ENCODE measurements at regions of chr22 and their contacts with region 1.

Region 1: DNA sequence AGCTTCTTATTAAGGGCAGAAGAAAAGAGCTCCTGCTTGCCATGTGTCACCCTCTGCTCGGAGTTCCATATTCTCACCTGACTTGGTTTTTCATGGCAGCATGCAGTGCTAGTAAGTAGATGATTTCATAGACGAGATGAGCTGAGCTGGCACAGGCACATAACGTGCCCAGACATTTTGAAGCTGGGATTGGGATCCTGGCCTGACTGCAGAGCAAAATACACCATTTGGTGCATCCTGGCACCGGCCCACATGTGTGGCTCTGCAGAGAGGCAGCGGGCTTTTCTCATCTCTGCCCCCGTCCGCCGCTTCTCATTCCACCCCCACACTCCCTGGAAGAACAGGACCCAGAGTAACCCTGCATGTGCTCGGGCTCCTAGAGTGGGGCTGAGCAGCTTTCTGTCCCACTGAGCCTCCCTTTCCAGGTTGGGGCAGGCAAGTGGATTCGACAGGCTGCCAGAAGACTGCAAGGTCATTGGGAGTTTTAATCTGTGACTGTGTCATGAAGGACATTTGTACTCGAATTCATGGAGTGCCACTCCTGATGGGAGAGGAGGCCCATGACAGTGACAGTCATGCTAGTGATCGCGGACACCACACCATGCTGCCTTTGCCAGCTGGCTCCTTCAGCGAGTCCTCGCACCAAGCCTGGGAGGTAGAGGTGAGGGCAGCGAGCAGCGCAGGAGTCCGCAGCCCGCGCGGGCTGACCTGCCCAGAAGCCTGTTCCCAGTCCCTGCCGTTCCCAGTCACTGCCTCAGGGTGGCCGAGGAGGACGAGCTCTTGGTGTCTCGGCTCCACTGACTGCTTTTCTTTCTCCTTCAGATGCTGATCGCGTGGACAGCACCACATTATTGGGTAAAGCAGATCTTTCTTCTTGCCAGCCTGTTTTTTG is 25.0 kb downstream of the FAM118A start:
- DNase-seq: peak; percentile 31 to 52
- H3K4me3 ChIP-seq: no peak overlapping the region
- H3K27ac ChIP-seq: no peak overlapping the region
- H3K4me1 ChIP-seq: no peaks in the 10 kb centered on the region
- H3K27me3 ChIP-seq: no peaks in the 10 kb centered on the region
- CTCF ChIP-seq: peak; percentile 50 to 58 (median 57)
- EP300 ChIP-seq: no peak
- POLR2A ChIP-seq: no peak
- RAD21 ChIP-seq: peak; percentile 46 to 55; a peak in 3 of 4 replicates

Region 2: DNA sequence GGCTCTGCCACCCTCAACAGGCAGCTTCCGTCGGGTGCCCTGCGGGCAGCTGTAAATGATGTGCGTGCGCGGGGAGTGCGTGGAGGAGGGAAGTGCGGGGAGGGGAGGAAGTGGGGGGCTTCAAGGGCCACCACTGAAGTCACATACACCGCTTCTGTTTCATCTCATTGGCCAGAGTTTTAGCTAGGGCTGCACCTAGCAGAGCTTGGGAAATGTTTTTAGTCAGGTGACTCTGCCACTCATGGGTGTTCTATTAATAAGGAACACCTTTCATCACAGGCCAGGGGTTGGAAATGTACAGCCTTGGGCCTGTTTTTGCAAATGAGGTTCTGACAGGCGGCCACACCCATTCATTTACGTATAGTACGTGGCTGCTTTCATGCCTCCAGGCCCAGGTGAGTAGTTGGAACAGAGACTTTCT is 10.5 kb before region 1 on chr22:
- CTCF ChIA-PET with region 1: interaction called, 19 read pairs
- POLR2A ChIA-PET with region 1: interaction called, 3 read pairs
- DNase-seq: no peak
- H3K4me3 ChIP-seq: no peak overlapping the region
- H3K27ac ChIP-seq: no peak overlapping the region
- H3K4me1 ChIP-seq: no peaks in the 10 kb centered on the region
- H3K27me3 ChIP-seq: no peaks in the 10 kb centered on the region
- CTCF ChIP-seq: no peak
- EP300 ChIP-seq: no peak
- POLR2A ChIP-seq: no peak
- RAD21 ChIP-seq: no peak

Region 3: GRCh38 chr22:45402466-45402985 is 67.8 kb after region 1 on chr22:
- CTCF ChIA-PET with region 1: interaction called, 11 read pairs
- POLR2A ChIA-PET with region 1: no interaction called
- DNase-seq: no peak
- H3K4me3 ChIP-seq: no peak overlapping the region
- H3K27ac ChIP-seq: no peak overlapping the region
- H3K4me1 ChIP-seq: no peaks in the 10 kb centered on the region
- H3K27me3 ChIP-seq: no peaks in the 10 kb centered on the region; a peak in 1 of 7 replicates
- CTCF ChIP-seq: no peak
- EP300 ChIP-seq: no peak
- POLR2A ChIP-seq: no peak
- RAD21 ChIP-seq: no peak

Measured in H1 (cell line).